CD8-positive, alpha-beta T cell (primary cell): ENCODE measurements at regions of chr3 and their contacts with region 1.

Region 1: GRCh38 chr3:140972833-140973232 is 31.2 kb downstream of the SLC25A36 start:
- DNase-seq: peak in 2 of 9 experiments; percentile 6 to 25
- ATAC-seq: peak; percentile 55
- H3K4me3 ChIP-seq: no peak overlapping the region
- H3K4me3 Mint-ChIP-seq: no peak overlapping the region
- H3K27ac ChIP-seq: no peak overlapping the region
- H3K27ac Mint-ChIP-seq: no peak overlapping the region
- H3K4me1 ChIP-seq: no peaks in the 10 kb centered on the region
- H3K4me1 Mint-ChIP-seq: peaks cover 4% of the 10 kb centered on the region
- H3K27me3 ChIP-seq: no peaks in the 10 kb centered on the region
- H3K27me3 Mint-ChIP-seq: no peaks in the 10 kb centered on the region
- CTCF ChIP-seq: peak; percentile 22

Region 2: DNA sequence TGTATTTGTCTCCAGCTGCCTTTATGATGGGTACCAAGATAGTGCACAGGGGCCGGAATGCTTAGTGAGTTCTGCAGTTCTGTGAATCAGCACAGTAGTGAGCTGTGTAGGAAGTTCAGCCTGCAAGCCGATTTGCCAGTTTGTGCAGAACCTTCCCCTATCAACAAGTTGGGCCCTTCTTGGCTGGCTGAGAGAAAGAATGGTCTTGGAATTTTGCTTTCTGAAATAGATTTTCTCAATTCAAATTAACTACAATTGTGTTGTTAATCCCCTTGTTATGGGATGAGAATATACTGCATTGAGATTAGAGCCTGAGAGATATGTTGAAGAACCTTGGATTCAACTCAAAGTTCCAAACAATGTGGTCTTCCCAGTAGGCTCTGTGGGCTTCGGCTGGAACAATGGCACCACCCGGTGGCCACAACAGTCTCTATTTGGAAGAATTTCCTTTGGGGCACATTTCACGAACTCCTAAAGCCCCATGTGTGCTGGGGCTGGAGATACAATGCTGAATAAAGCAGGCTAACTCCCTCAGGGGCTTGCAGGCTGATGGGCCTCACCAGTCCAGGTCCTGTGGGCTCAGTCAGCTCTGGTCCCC is 235.9 kb before region 1 on chr3:
- CTCF ChIA-PET with region 1: no interaction called
- POLR2A ChIA-PET with region 1: no interaction called
- intact Hi-C with region 1: no loop called
- DNase-seq: peak in 2 of 9 experiments; percentile 6 to 17
- ATAC-seq: no peak
- H3K4me3 ChIP-seq: no peak overlapping the region
- H3K4me3 Mint-ChIP-seq: no peak overlapping the region
- H3K27ac ChIP-seq: no peak overlapping the region
- H3K27ac Mint-ChIP-seq: no peak overlapping the region
- H3K4me1 ChIP-seq: no peaks in the 10 kb centered on the region
- H3K4me1 Mint-ChIP-seq: peaks cover 3% of the 10 kb centered on the region
- H3K27me3 ChIP-seq: no peaks in the 10 kb centered on the region
- H3K27me3 Mint-ChIP-seq: no peaks in the 10 kb centered on the region
- CTCF ChIP-seq: no peak

Region 3: DNA sequence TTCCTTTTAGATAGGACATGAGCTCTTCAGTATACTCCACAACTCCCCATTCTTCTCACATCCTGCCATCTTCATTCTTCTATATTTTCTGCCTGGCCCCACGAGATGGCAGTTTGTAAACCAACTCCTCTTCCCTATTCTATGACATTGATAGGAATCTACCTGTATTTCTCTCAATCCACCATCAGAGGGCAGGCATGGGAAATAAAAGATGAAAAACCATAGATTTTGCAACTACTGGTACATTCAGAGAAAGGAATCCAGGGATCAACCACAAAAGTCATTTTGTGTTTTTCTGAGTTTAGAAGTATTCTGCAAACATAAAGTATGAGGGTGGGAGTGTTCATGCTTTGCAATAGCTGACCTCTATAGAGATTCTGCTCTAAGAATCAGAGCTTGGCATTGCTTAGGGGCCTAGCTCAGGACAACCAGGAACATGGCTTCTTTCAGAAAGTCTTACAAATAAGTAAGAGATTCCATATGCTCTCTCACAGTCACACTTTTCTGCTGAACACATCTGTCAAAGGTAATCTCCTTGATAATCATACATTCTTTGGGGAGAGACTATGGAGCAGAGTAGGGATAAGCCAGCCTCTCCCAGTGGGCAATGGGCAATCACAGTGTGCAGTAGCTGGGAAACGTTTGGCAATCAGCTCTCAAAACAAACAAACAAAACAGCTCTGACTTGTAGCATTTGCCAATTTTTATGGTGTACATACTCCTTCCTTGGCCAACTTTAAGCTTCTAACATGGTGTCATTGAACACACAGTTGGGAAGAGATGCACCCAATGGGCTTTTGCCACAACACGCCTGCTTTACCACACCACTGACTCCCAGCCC is 74.3 kb before region 1 on chr3:
- CTCF ChIA-PET with region 1: interaction called, 3 read pairs
- POLR2A ChIA-PET with region 1: no interaction called
- intact Hi-C with region 1: loop called (anchors 1 to 2 kb)
- DNase-seq: peak in 2 of 9 experiments; percentile 45 to 58
- ATAC-seq: peak; percentile 58
- H3K4me3 ChIP-seq: no peak overlapping the region
- H3K4me3 Mint-ChIP-seq: no peak overlapping the region
- H3K27ac ChIP-seq: no peak overlapping the region
- H3K27ac Mint-ChIP-seq: no peak overlapping the region
- H3K4me1 ChIP-seq: no peaks in the 10 kb centered on the region
- H3K4me1 Mint-ChIP-seq: no peaks in the 10 kb centered on the region
- H3K27me3 ChIP-seq: no peaks in the 10 kb centered on the region
- H3K27me3 Mint-ChIP-seq: peaks cover 19% of the 10 kb centered on the region
- CTCF ChIP-seq: peak; percentile 72

Region 4: GRCh38 chr3:140922634-140923033 is 50.2 kb before region 1 on chr3:
- CTCF ChIA-PET with region 1: interaction called, 10 read pairs
- POLR2A ChIA-PET with region 1: no interaction called
- intact Hi-C with region 1: loop called (anchors 1 to 2 kb)
- DNase-seq: peak in 2 of 9 experiments; percentile 26 to 43
- ATAC-seq: peak; percentile 55
- H3K4me3 ChIP-seq: no peak overlapping the region
- H3K4me3 Mint-ChIP-seq: no peak overlapping the region
- H3K27ac ChIP-seq: no peak overlapping the region
- H3K27ac Mint-ChIP-seq: no peak overlapping the region
- H3K4me1 ChIP-seq: no peaks in the 10 kb centered on the region
- H3K4me1 Mint-ChIP-seq: no peaks in the 10 kb centered on the region
- H3K27me3 ChIP-seq: peaks cover 0 to 2% of the 10 kb centered on the region in 2 experiments
- H3K27me3 Mint-ChIP-seq: peaks cover 9% of the 10 kb centered on the region
- CTCF ChIP-seq: peak; percentile 44

Region 5: DNA sequence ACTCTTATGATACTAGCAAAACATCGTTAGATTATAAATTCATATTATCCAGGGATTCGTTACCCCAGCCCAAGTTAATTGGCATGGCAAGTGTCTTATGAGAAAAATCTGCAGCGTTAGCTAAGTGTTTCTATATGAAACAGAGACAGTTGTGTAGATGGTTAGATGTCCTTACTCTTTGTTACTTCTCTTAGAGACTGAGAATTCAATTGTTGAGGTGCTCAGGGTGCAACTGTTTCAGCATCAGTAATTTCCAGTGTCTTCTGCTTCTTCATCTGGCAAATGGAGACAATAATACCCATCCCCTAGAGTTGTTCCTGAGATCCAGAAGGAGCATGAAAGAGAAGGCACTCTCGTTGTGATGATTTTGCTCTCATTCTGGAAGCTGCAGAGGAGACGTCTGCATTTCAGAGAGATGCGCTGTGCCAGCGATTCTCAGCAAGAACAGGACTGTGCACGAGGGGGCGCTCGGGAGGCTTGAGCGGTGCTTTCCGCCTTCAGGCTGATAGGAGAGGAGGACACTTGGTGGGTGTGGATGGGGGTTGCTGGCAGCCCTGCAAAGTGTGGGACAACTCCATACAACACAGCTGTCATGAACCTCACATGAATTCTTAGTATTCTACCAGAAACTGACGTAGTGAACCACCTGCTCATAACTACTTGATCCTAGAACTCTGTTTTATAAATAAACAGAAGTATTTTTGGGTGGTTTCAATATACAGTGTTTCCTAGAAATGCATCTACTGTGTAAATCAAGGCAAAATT is 38.6 kb after region 1 on chr3:
- CTCF ChIA-PET with region 1: no interaction called
- POLR2A ChIA-PET with region 1: no interaction called
- intact Hi-C with region 1: loop called in 1 of 2 experiments (anchors 1 kb)
- DNase-seq: peak; percentile 48 to 85 (median 73)
- ATAC-seq: peak; percentile 99
- H3K4me3 ChIP-seq: no peak overlapping the region
- H3K4me3 Mint-ChIP-seq: no peak overlapping the region
- H3K27ac ChIP-seq: no peak overlapping the region
- H3K27ac Mint-ChIP-seq: no peak overlapping the region
- H3K4me1 ChIP-seq: peaks cover 5% of the 10 kb centered on the region
- H3K4me1 Mint-ChIP-seq: peaks cover 5% of the 10 kb centered on the region
- H3K27me3 ChIP-seq: peaks cover 0 to 6% of the 10 kb centered on the region in 2 experiments
- H3K27me3 Mint-ChIP-seq: peaks cover 22% of the 10 kb centered on the region
- CTCF ChIP-seq: peak; percentile 71